ENCODE measurements at regions of chr9 and their contacts with region 1.

Region 1: DNA sequence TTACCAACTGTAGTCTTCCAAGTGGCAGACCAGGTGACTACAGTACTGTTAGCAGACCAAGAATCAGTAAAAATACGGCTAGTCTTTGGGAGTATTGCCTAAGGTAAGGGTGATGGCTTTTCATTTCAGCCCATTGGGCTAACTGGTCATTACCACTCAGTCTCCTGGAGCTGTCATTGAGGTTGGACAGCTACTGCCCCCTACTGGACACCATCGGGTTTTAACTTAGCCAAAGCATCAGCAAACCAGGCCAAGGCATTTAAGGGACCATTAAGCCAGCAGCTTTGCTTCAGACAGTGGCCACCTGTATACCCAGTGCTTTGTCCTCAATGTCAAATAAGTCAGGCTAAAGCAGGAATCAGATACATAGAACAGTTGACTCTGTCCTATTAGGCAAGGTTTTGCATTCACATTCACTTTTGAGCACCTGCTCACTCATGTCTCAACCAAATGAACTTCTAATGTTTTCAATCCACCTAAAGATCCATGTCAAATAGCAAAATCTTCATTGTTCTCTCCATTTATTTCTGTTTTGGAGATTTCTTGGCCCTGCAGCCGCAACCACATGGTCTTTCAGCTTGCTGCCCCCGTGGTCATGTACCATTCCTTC is 117.2 kb downstream of the INVS start:
- DNase-seq: peak; percentile 81
- ATAC-seq: peak; percentile 80
- H3K4me3 Mint-ChIP-seq: no peak overlapping the region
- H3K27ac Mint-ChIP-seq: no peak overlapping the region
- H3K4me1 Mint-ChIP-seq: peaks cover 3% of the 10 kb centered on the region
- H3K27me3 Mint-ChIP-seq: no peaks in the 10 kb centered on the region
- CTCF ChIP-seq: peak; percentile 72

Region 2: DNA sequence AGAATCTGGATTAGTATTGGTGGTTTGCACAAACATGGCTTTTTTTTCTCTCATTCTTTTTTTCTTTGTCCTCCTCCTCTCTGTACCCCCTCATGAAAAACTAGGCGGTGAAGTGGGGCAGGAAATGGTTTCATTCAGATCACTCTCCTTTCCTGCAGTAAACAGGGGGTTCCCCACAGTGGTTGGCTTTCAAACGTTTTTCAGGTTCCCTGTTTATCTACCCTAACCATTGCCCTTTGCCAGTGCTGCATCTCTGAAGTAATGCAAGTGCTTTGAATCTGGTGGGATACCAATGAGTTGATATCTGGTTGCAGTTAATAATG is 364.8 kb before region 1 on chr9:
- CTCF ChIA-PET with region 1: no interaction called
- POLR2A ChIA-PET with region 1: no interaction called
- intact Hi-C with region 1: no loop called
- DNase-seq: peak; percentile 72
- ATAC-seq: peak; percentile 78
- H3K4me3 Mint-ChIP-seq: no peak overlapping the region
- H3K27ac Mint-ChIP-seq: peak overlapping the region; percentile 83
- H3K4me1 Mint-ChIP-seq: peaks cover 55% of the 10 kb centered on the region
- H3K27me3 Mint-ChIP-seq: no peaks in the 10 kb centered on the region
- CTCF ChIP-seq: no peak

Region 3: GRCh38 chr9:100028201-100028784 is 188.0 kb before region 1 on chr9:
- CTCF ChIA-PET with region 1: interaction called, 49 read pairs
- POLR2A ChIA-PET with region 1: no interaction called
- intact Hi-C with region 1: loop called (anchors 1 kb)
- DNase-seq: peak; percentile 84
- ATAC-seq: peak; percentile 100
- H3K4me3 Mint-ChIP-seq: no peak overlapping the region
- H3K27ac Mint-ChIP-seq: no peak overlapping the region
- H3K4me1 Mint-ChIP-seq: peaks cover 9% of the 10 kb centered on the region
- H3K27me3 Mint-ChIP-seq: no peaks in the 10 kb centered on the region
- CTCF ChIP-seq: peak; percentile 89

Region 4: DNA sequence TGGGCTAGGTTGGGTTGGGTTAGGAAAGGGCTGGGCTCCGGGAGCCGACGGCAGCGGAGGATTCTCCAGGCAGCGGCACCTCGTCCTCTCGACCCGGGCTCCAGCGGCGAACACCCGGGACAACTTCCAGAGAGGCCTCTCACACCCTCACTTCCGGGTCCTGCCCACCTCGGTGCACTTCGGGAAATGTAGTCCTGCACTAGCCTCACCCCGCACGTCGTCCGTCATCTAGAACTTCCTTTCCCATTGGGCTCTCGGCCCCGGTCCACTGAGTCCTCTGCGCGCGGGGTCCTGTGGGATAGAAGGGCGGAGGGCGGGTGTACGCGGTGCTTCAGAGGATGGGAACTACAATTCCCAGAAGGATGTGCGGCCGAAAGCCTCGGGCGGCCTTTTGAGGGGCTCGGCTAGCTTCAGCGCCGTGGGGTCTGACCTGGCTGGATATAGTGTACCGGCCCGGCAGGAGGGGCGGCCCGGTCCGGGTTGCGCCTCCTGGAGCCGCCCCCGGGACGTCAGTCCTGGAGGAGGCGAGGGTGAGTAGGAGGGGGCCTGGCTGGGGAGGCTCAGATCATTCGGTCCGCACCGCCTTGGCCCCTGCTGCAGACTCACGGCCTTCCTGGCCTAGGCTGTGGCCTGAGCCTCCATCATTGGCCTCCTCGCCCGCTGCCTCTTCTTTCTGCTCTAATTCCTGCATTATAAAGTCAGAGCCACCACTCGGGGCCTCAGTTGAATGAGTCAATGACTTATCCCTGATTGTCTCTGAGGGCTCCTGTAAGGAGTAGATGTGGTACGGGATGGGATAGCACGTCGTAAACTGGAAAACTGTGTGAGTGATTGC is 117.2 kb before region 1 on chr9 and contains the starts of genes ERP44 and INVS:
- CTCF ChIA-PET with region 1: interaction called, 4 read pairs
- POLR2A ChIA-PET with region 1: interaction called, 3 read pairs
- intact Hi-C with region 1: loop called (anchors 10 kb)
- DNase-seq: peak; percentile 99
- ATAC-seq: peak; percentile 99
- H3K4me3 Mint-ChIP-seq: peak within 1 kb of the TSS; percentile 98
- H3K27ac Mint-ChIP-seq: peak within 1 kb of the TSS; percentile 96
- H3K4me1 Mint-ChIP-seq: peaks cover 29% of the 10 kb centered on the region
- H3K27me3 Mint-ChIP-seq: no peaks in the 10 kb centered on the region
- CTCF ChIP-seq: no peak
- total RNA-seq, gene ERP44: 10.2 to 11.1 TPM
- total RNA-seq, gene INVS: 18.0 to 20.4 TPM

Region 5: DNA sequence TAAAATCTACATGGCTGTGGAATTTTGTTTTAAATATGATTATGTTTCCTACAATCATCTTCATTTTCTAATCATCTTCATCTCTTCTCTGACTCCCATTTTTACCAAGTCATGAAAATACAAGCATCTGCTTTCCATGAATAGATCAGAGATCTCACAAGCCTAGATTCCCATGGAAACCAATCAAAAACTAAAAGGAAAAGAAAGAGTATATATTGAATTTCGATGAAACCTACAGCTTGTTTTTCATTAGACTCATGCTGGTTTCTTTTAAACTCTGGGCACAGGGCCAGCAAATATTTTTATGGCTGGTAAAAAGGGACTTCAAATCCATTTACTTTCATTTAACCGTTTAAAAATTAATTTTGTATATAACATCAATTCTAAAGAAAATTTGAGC is 66.1 kb before region 1 on chr9:
- CTCF ChIA-PET with region 1: no interaction called
- POLR2A ChIA-PET with region 1: no interaction called
- intact Hi-C with region 1: no loop called
- DNase-seq: no peak
- ATAC-seq: no peak
- H3K4me3 Mint-ChIP-seq: no peak overlapping the region
- H3K27ac Mint-ChIP-seq: no peak overlapping the region
- H3K4me1 Mint-ChIP-seq: no peaks in the 10 kb centered on the region
- H3K27me3 Mint-ChIP-seq: no peaks in the 10 kb centered on the region
- CTCF ChIP-seq: no peak

Region 6: DNA sequence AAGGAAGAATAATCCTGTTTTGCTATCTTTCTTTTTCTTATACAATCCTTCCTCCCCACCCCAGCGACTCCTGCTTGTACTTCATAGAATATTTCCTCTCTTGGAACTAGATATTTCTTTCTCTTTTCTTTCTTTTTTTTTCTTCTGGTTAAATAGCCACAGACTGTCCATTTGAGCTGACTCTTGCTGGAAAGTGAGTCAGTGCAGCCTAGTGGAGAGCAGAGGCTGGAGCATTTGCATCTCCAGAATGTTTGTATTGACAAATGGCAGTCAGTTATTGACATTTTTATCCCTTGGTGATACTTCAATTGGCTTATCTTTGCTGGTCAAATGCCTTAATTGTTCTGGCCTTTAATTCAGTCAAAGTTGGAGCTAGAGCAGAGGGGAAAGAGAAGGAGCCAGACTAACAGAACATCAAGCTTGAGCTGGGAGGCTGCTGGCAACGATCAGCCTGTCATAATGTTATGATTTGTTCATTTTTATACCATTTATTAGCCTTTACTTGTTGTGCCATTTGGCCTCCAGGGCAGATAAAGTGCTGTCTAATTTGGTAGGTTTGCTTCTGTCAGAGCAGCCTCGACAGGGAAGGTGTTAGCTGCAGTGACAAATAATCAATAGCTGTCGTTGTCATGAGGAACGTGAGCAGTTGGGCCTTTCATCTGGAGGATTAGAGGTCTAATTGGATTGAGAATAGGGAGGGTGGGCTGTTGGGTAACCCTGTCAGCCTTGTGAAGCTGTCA is 48.2 kb before region 1 on chr9:
- CTCF ChIA-PET with region 1: no interaction called
- POLR2A ChIA-PET with region 1: no interaction called
- intact Hi-C with region 1: no loop called
- DNase-seq: no peak
- ATAC-seq: no peak
- H3K4me3 Mint-ChIP-seq: no peak overlapping the region
- H3K27ac Mint-ChIP-seq: no peak overlapping the region
- H3K4me1 Mint-ChIP-seq: no peaks in the 10 kb centered on the region
- H3K27me3 Mint-ChIP-seq: no peaks in the 10 kb centered on the region
- CTCF ChIP-seq: no peak

Region 7: GRCh38 chr9:100589582-100589981 is 373.3 kb after region 1 on chr9:
- CTCF ChIA-PET with region 1: no interaction called
- POLR2A ChIA-PET with region 1: no interaction called
- intact Hi-C with region 1: no loop called
- DNase-seq: no peak
- ATAC-seq: no peak
- H3K4me3 Mint-ChIP-seq: no peak overlapping the region
- H3K27ac Mint-ChIP-seq: no peak overlapping the region
- H3K4me1 Mint-ChIP-seq: no peaks in the 10 kb centered on the region
- H3K27me3 Mint-ChIP-seq: no peaks in the 10 kb centered on the region
- CTCF ChIP-seq: no peak

Measured in activated CD8-positive, alpha-beta T cell treated with anti-CD3 and anti-CD28 coated beads for 36 hours (primary cell).